Activated B cell treated with CpG ODN at 0.5 μM for 24 hours (primary cell): ENCODE measurements at regions of chr11 and their contacts with region 1.

Region 1: GRCh38 chr11:64341851-64342791 is 2.1 kb downstream of the CCDC88B start:
- DNase-seq: peak; percentile 87
- ATAC-seq: peak; percentile 51
- H3K4me3 Mint-ChIP-seq: peak overlapping the region; percentile 19
- H3K27ac Mint-ChIP-seq: no peak overlapping the region
- H3K4me1 Mint-ChIP-seq: peaks cover 54% of the 10 kb centered on the region
- H3K27me3 Mint-ChIP-seq: no peaks in the 10 kb centered on the region
- CTCF ChIP-seq: no peak

Region 2: GRCh38 chr11:64240394-64241174 is 101.5 kb before region 1 on chr11 and contains the start of gene FKBP2:
- CTCF ChIA-PET with region 1: no interaction called
- POLR2A ChIA-PET with region 1: interaction called, 7 read pairs
- intact Hi-C with region 1: loop called (anchors 1 kb)
- DNase-seq: peak; percentile 98
- ATAC-seq: peak; percentile 61
- H3K4me3 Mint-ChIP-seq: peak within 1 kb of the TSS; percentile 91
- H3K27ac Mint-ChIP-seq: peak within 1 kb of the TSS; percentile 98
- H3K4me1 Mint-ChIP-seq: peaks cover 75% of the 10 kb centered on the region
- H3K27me3 Mint-ChIP-seq: no peaks in the 10 kb centered on the region
- CTCF ChIP-seq: no peak
- total RNA-seq, gene FKBP2: 31.4 and 39.4 TPM in 2 replicates

Region 3: GRCh38 chr11:64284048-64284961 is 57.8 kb before region 1 on chr11 and contains the start of gene BAD:
- CTCF ChIA-PET with region 1: no interaction called
- POLR2A ChIA-PET with region 1: interaction called, 14 read pairs
- intact Hi-C with region 1: loop called (anchors 2 kb)
- DNase-seq: peak; percentile 80
- ATAC-seq: peak; percentile 79
- H3K4me3 Mint-ChIP-seq: peak within 1 kb of the TSS; percentile 90
- H3K27ac Mint-ChIP-seq: peak within 1 kb of the TSS; percentile 92
- H3K4me1 Mint-ChIP-seq: peaks cover 20% of the 10 kb centered on the region
- H3K27me3 Mint-ChIP-seq: no peaks in the 10 kb centered on the region
- CTCF ChIP-seq: no peak
- total RNA-seq, gene BAD: 21.7 and 26.6 TPM in 2 replicates

Region 4: DNA sequence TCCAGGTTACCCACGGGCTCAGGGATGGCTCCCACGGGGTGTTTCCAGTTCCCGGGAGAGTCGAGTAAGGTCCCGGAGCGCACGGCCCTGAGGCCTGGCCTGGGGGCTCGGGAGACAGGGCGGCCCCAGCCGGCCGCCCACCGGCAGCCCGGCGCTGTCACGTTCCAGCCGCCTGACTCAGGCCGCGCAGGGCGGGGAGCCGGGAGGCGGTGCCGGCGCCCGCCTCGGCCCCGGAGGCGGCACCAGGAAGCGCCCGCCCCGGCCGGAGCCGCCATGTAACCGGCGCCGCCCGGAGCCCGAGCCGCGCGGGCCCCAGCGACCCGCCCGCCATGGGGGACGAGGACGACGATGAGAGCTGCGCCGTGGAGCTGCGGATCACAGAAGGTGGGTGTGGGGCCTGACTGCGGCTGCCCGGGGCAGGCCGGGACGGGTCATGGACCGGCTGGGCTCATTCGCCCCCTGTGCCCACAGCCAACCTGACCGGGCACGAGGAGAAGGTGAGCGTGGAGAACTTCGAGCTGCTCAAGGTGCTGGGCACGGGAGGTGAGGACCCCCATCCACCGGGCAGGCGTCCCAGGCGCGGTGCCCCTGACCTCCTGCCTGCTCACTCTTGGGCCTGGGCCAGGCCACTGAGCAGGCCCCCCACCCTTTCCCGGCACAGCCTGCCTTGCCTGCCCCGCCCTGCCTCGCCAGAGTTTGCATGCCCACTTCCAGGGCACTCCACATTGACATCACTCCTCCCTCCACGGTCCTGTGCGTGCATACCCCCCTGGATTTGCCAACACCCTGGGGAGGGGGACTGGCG is 17.0 kb after region 1 on chr11 and contains the start of gene RPS6KA4:
- CTCF ChIA-PET with region 1: interaction called, 19 read pairs
- POLR2A ChIA-PET with region 1: interaction called, 43 read pairs
- intact Hi-C with region 1: loop called (anchors 1 kb)
- DNase-seq: peak; percentile 55
- ATAC-seq: peak; percentile 72
- H3K4me3 Mint-ChIP-seq: peak within 1 kb of the TSS; percentile 82
- H3K27ac Mint-ChIP-seq: peak within 1 kb of the TSS; percentile 53
- H3K4me1 Mint-ChIP-seq: peaks cover 47% of the 10 kb centered on the region
- H3K27me3 Mint-ChIP-seq: no peaks in the 10 kb centered on the region
- CTCF ChIP-seq: no peak
- total RNA-seq, gene RPS6KA4: 18.0 and 22.6 TPM in 2 replicates

Region 5: GRCh38 chr11:64835621-64836390 is 493.7 kb after region 1 on chr11:
- CTCF ChIA-PET with region 1: no interaction called
- POLR2A ChIA-PET with region 1: interaction called, 13 read pairs
- intact Hi-C with region 1: no loop called
- DNase-seq: no peak
- ATAC-seq: no peak
- H3K4me3 Mint-ChIP-seq: no peak overlapping the region
- H3K27ac Mint-ChIP-seq: no peak overlapping the region
- H3K4me1 Mint-ChIP-seq: no peaks in the 10 kb centered on the region
- H3K27me3 Mint-ChIP-seq: no peaks in the 10 kb centered on the region
- CTCF ChIP-seq: no peak

Region 6: GRCh38 chr11:65340226-65340625 is 998.1 kb after region 1 on chr11:
- CTCF ChIA-PET with region 1: no interaction called
- POLR2A ChIA-PET with region 1: no interaction called
- intact Hi-C with region 1: no loop called
- DNase-seq: no peak
- ATAC-seq: no peak
- H3K4me3 Mint-ChIP-seq: no peak overlapping the region
- H3K27ac Mint-ChIP-seq: no peak overlapping the region
- H3K4me1 Mint-ChIP-seq: peaks cover 20% of the 10 kb centered on the region
- H3K27me3 Mint-ChIP-seq: no peaks in the 10 kb centered on the region
- CTCF ChIP-seq: no peak